GM12878 (cell line): ENCODE measurements at regions of chr17 and their contacts with region 1.

Region 1: DNA sequence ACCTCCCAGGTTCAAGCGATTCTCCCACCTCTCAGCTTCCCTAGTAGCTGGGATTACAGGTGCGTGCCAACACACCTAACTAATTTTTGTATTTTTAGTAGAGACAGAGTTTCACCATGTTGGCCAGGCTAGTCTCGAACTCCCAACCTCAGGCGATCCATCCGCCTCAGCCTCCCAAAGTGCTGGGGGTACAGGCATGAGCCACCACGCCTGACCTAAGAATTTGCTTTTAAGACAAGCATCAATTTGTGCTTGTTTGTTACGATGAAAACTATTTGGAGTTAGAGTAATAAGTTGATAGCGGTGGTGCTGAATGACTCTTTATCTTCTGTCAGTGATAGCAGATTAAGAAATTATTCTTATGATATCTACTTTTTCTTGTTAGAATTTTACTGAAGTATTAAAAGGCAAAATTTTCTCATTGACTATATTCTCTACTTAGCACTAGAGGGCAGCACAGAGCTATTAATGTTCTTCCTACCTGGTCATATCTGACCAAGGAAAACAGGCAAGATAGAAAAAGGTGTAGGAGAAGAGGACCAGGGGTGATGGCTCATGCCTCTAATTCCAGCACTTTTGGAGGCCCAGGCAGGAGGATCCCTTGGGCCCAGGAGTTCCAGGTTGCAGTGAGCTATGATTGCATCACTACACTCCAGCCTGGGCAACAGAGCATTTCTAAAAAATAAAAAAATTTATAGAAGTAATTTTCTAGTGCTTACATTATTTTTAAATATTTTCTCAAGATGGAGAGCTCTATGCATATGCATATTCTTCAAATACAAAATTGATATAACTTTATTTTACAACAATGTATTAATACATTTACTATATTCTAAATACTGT is 24.5 kb downstream of the STXBP4 start:
- DNase-seq: no peak
- ATAC-seq: peak; percentile 79
- H3K4me3 ChIP-seq: no peak overlapping the region
- H3K27ac ChIP-seq: no peak overlapping the region
- H3K4me1 ChIP-seq: no peaks in the 10 kb centered on the region
- H3K27me3 ChIP-seq: no peaks in the 10 kb centered on the region
- CTCF ChIP-seq: peak; percentile 50 to 66 (median 51); a peak in 5 of 6 replicates
- EP300 ChIP-seq: no peak
- POLR2A ChIP-seq: no peak
- RAD21 ChIP-seq: peak; percentile 86

Region 2: GRCh38 chr17:54979657-54980056 is 13.4 kb before region 1 on chr17:
- CTCF ChIA-PET with region 1: interaction called, 28 read pairs
- POLR2A ChIA-PET with region 1: no interaction called
- RAD21 ChIA-PET with region 1: no interaction called
- SMC1A ChIA-PET with region 1: interaction called, 17 read pairs
- in situ Hi-C with region 1: no loop called
- intact Hi-C with region 1: no loop called
- DNase-seq: no peak
- ATAC-seq: no peak
- H3K4me3 ChIP-seq: no peak overlapping the region
- H3K27ac ChIP-seq: no peak overlapping the region
- H3K4me1 ChIP-seq: peaks cover 12% of the 10 kb centered on the region
- H3K27me3 ChIP-seq: no peaks in the 10 kb centered on the region
- CTCF ChIP-seq: no peak
- EP300 ChIP-seq: no peak
- POLR2A ChIP-seq: no peak
- RAD21 ChIP-seq: no peak

Region 3: DNA sequence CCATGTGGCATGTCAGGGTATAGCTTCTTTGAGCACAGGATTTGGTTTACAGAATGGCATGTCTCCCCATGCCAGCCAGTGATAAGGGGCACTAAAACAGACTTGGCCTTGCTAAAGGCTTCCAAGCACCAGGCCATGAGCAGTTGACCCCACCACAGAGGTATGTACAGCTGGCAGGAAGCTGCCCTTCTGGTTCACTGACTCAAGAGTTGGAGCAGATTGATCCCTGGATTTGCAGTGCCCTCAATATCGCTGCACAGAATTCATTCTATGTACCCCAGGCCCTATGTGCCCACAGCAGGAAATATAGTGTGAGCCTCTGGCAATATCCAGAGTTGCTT is 296.1 kb after region 1 on chr17:
- CTCF ChIA-PET with region 1: interaction called, 52 read pairs
- POLR2A ChIA-PET with region 1: no interaction called
- RAD21 ChIA-PET with region 1: interaction called, 12 read pairs
- SMC1A ChIA-PET with region 1: interaction called, 34 read pairs
- in situ Hi-C with region 1: loop called (anchors 5 kb)
- intact Hi-C with region 1: no loop called
- DNase-seq: no peak
- ATAC-seq: no peak
- H3K4me3 ChIP-seq: no peak overlapping the region
- H3K27ac ChIP-seq: no peak overlapping the region
- H3K4me1 ChIP-seq: no peaks in the 10 kb centered on the region
- H3K27me3 ChIP-seq: no peaks in the 10 kb centered on the region; a peak in 2 of 4 replicates
- CTCF ChIP-seq: no peak
- EP300 ChIP-seq: no peak
- POLR2A ChIP-seq: no peak
- RAD21 ChIP-seq: no peak

Region 4: DNA sequence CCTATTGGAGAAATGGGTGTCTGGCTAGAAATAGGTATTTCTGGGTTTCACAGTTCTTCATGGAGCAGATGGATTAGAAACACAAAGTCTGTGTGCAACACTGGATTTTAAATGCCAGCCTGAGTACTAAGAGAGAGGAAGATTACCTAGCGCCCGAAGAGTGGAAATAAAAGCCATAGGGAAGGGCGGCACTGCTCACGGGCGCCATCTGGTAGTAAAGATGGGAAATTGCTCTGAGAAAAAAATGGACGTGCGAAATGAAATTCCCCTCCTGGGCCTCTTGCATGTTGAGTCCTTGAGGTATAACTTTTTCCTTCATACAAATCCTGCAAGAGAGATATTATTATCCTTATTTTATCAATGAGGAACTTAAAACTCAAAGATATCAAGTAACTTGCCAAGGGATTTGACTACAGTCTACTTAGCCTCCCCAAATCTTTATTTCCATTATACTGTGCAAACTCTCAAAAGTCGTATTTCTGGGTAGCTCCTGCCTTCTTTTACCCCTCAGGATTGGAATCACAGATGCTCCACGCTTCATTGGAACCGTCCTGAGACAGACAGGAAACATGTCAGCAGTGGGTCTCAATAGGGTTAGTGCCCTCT is 355.8 kb after region 1 on chr17:
- CTCF ChIA-PET with region 1: interaction called, 95 read pairs
- POLR2A ChIA-PET with region 1: no interaction called
- RAD21 ChIA-PET with region 1: interaction called, 26 read pairs
- SMC1A ChIA-PET with region 1: interaction called, 27 read pairs
- in situ Hi-C with region 1: loop called (anchors 5 kb)
- intact Hi-C with region 1: loop called (anchors 1 kb)
- DNase-seq: no peak
- ATAC-seq: peak; percentile 79
- H3K4me3 ChIP-seq: no peak overlapping the region
- H3K27ac ChIP-seq: no peak overlapping the region
- H3K4me1 ChIP-seq: no peaks in the 10 kb centered on the region
- H3K27me3 ChIP-seq: no peaks in the 10 kb centered on the region
- CTCF ChIP-seq: peak; percentile 84 to 87 (median 87)
- EP300 ChIP-seq: no peak
- POLR2A ChIP-seq: no peak
- RAD21 ChIP-seq: peak; percentile 70

Region 5: GRCh38 chr17:55366020-55366481 is 373.0 kb after region 1 on chr17:
- CTCF ChIA-PET with region 1: interaction called, 10 read pairs
- POLR2A ChIA-PET with region 1: no interaction called
- RAD21 ChIA-PET with region 1: no interaction called
- SMC1A ChIA-PET with region 1: interaction called, 3 read pairs
- in situ Hi-C with region 1: no loop called
- intact Hi-C with region 1: no loop called
- DNase-seq: no peak
- ATAC-seq: no peak
- H3K4me3 ChIP-seq: no peak overlapping the region
- H3K27ac ChIP-seq: no peak overlapping the region
- H3K4me1 ChIP-seq: no peaks in the 10 kb centered on the region
- H3K27me3 ChIP-seq: no peaks in the 10 kb centered on the region
- CTCF ChIP-seq: no peak
- EP300 ChIP-seq: no peak
- POLR2A ChIP-seq: no peak
- RAD21 ChIP-seq: no peak